ENCODE measurements at regions of chr9 and their contacts with region 1.

Region 1: DNA sequence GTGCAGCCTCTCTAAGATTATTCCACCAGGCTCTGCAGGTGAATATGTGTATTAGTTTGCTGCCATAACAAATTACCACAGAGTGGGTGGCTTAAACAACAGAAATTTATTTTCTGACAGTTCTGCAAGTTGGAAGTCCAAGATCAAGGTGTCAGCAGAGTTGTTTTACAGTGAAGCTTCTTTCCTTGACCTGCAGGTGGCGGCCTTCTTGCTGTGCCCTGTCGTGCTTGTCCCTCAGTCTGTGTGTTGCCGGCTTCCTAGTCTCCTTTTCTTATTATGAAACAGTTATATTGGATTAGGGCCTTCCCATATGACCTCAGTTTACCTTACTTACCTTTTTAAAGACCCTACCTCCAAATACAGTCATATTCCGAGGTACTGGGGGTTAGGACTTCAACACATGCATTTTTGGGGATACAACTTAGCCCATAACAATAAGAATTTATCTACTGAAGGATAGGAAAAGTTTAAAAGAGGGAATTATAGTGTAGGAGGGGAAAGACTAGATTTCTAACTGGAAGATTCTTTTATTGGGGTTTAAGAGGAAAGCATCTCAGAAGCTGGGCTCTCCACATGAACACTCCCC is 97.4 kb downstream of the OSTF1 start:
- DNase-seq: peak; percentile 72
- H3K4me3 Mint-ChIP-seq: no peak overlapping the region
- H3K27ac Mint-ChIP-seq: no peak overlapping the region
- H3K4me1 Mint-ChIP-seq: peaks cover 16% of the 10 kb centered on the region
- H3K27me3 Mint-ChIP-seq: no peaks in the 10 kb centered on the region

Region 2: GRCh38 chr9:74952281-74953151 is 233.2 kb before region 1 on chr9 and contains the start of gene C9orf40:
- CTCF ChIA-PET with region 1: no interaction called
- intact Hi-C with region 1: loop called (anchors 5 kb)
- DNase-seq: peak; percentile 92
- H3K4me3 Mint-ChIP-seq: peak within 1 kb of the TSS; percentile 95
- H3K27ac Mint-ChIP-seq: peak within 1 kb of the TSS; percentile 89
- H3K4me1 Mint-ChIP-seq: peaks cover 26% of the 10 kb centered on the region
- H3K27me3 Mint-ChIP-seq: no peaks in the 10 kb centered on the region
- total RNA-seq, gene C9orf40: 23.1 to 23.9 TPM

Region 3: DNA sequence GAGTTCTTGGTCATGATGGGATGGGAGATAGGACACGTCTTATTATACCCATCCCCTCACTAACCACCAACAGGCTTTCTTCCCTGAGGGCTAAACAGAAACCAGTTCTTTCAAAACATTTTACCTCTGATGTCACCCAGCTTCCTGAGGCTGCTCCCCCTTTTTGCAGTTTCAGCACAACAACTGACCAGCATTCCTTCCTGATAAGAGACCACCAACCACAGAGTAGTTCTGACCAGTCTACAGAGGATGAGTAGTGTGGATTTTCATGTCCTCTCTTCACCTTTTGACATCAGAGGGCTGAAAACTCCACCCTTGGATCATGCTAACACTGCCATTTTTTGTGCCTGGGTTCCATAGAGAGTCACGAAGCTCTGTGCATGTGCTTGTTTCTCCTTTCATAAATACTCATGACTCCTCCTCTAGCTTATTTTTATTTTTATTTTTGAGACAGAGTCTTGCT is 14.7 kb before region 1 on chr9:
- CTCF ChIA-PET with region 1: interaction called, 18 read pairs
- intact Hi-C with region 1: no loop called
- DNase-seq: no peak
- H3K4me3 Mint-ChIP-seq: no peak overlapping the region
- H3K27ac Mint-ChIP-seq: no peak overlapping the region
- H3K4me1 Mint-ChIP-seq: peaks cover 15% of the 10 kb centered on the region
- H3K27me3 Mint-ChIP-seq: no peaks in the 10 kb centered on the region

Region 4: GRCh38 chr9:75238311-75238978 is 52.8 kb after region 1 on chr9:
- CTCF ChIA-PET with region 1: interaction called, 3 read pairs
- intact Hi-C with region 1: loop called (anchors 1 kb)
- DNase-seq: peak; percentile 58
- H3K4me3 Mint-ChIP-seq: no peak overlapping the region
- H3K27ac Mint-ChIP-seq: no peak overlapping the region
- H3K4me1 Mint-ChIP-seq: no peaks in the 10 kb centered on the region
- H3K27me3 Mint-ChIP-seq: no peaks in the 10 kb centered on the region

Region 5: GRCh38 chr9:76023715-76024195 is 838.1 kb after region 1 on chr9:
- CTCF ChIA-PET with region 1: no interaction called
- intact Hi-C with region 1: loop called (anchors 10 kb)
- DNase-seq: peak; percentile 64
- H3K4me3 Mint-ChIP-seq: peak overlapping the region; percentile 68
- H3K27ac Mint-ChIP-seq: peak overlapping the region; percentile 83
- H3K4me1 Mint-ChIP-seq: peaks cover 92% of the 10 kb centered on the region
- H3K27me3 Mint-ChIP-seq: no peaks in the 10 kb centered on the region